PC-9 (cell line): ENCODE measurements at regions of chr6 and their contacts with region 1.

Region 1: GRCh38 chr6:52020945-52021570 is 66.4 kb downstream of the PKHD1 start:
- DNase-seq: no peak
- H3K4me3 ChIP-seq: no peak overlapping the region
- H3K27ac ChIP-seq: no peak overlapping the region
- H3K4me1 ChIP-seq: no peaks in the 10 kb centered on the region
- H3K27me3 ChIP-seq: 0 out of 2 replicates have a peak, but pooled peaks cover 13% of the 10 kb centered on the region
- CTCF ChIP-seq: peak; percentile 91

Region 2: DNA sequence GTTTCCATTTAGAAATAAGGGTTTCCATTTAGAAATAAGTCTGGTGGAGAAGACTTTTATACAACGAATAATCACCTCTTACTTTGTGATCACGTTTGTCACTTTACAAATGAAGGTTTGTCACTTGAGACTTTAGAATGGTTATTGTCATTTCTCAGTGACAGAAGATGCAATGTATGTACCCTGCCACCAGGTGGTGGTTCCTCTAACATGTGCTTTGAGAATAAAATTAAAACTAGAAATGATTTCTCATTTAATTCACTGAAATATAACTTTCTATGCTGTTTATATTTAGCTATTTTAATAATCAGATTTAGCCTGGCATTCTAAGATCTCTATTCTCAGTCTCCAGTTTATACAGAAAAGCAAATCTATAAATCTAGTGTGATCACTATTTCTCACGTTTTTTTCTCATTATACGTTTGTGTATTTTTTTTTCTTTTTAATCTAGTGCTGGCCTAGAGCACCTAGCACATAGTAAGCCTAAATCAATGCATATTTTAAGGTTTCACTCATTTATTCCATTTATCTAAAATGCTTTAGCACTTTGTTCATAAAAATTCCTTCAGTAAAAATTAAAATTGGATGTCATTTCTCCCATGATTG is 1365.1 kb before region 1 on chr6:
- CTCF ChIA-PET with region 1: no interaction called
- POLR2A ChIA-PET with region 1: no interaction called
- intact Hi-C with region 1: loop called (anchors 5 kb)
- DNase-seq: no peak
- H3K4me3 ChIP-seq: no peak overlapping the region
- H3K27ac ChIP-seq: no peak overlapping the region
- H3K4me1 ChIP-seq: no peaks in the 10 kb centered on the region
- H3K27me3 ChIP-seq: no peaks in the 10 kb centered on the region
- CTCF ChIP-seq: peak; percentile 74

Region 3: DNA sequence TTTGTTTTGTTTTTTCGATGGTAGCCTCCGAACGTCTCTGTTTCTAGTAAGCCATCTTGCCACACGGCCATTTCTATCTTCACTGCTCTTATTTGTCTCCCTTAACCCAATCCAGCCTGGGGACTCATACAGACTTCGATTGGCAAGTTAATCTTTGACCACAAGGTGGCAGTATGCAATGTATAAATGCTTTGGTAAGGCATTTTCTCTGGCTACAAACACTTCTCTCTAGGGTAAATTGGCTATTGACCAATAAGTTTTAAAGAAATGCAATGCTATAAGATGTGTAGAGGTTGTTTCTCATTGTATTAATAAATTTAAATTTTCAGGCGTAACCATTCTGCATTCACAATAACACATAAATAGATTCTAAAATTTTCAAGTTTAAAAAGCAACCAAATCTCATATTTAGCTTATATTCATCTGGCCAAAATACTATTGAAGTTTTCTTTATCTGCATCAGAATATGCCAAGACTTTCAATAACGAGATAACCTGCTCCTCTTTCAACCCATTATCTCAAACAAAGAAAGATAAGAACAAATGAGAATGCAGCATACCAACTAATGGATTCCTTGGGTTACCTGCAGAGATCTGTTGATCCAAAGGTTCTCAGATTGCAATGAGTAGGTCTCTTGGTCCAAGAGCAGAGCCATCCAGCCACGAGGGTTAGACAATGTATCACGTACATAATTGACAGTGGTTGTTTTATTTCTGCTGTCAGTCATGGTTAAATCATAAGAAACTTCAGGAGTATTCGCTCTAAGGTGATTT is 165.6 kb before region 1 on chr6:
- CTCF ChIA-PET with region 1: no interaction called
- POLR2A ChIA-PET with region 1: no interaction called
- intact Hi-C with region 1: loop called (anchors 10 kb)
- DNase-seq: peak in 1 of 2 experiments; percentile 54
- H3K4me3 ChIP-seq: no peak overlapping the region
- H3K27ac ChIP-seq: no peak overlapping the region
- H3K4me1 ChIP-seq: no peaks in the 10 kb centered on the region
- H3K27me3 ChIP-seq: no peaks in the 10 kb centered on the region
- CTCF ChIP-seq: peak; percentile 78

Region 4: GRCh38 chr6:51868591-51869355 is 152.3 kb before region 1 on chr6:
- CTCF ChIA-PET with region 1: interaction called, 14 read pairs
- POLR2A ChIA-PET with region 1: no interaction called
- intact Hi-C with region 1: no loop called
- DNase-seq: no peak
- H3K4me3 ChIP-seq: no peak overlapping the region
- H3K27ac ChIP-seq: no peak overlapping the region
- H3K4me1 ChIP-seq: no peaks in the 10 kb centered on the region
- H3K27me3 ChIP-seq: no peaks in the 10 kb centered on the region
- CTCF ChIP-seq: no peak

Region 5: GRCh38 chr6:52042141-52042885 is 21.3 kb after region 1 on chr6:
- CTCF ChIA-PET with region 1: no interaction called
- POLR2A ChIA-PET with region 1: no interaction called
- intact Hi-C with region 1: no loop called
- DNase-seq: no peak
- H3K4me3 ChIP-seq: no peak overlapping the region
- H3K27ac ChIP-seq: no peak overlapping the region
- H3K4me1 ChIP-seq: no peaks in the 10 kb centered on the region
- H3K27me3 ChIP-seq: no peaks in the 10 kb centered on the region
- CTCF ChIP-seq: no peak

Region 6: DNA sequence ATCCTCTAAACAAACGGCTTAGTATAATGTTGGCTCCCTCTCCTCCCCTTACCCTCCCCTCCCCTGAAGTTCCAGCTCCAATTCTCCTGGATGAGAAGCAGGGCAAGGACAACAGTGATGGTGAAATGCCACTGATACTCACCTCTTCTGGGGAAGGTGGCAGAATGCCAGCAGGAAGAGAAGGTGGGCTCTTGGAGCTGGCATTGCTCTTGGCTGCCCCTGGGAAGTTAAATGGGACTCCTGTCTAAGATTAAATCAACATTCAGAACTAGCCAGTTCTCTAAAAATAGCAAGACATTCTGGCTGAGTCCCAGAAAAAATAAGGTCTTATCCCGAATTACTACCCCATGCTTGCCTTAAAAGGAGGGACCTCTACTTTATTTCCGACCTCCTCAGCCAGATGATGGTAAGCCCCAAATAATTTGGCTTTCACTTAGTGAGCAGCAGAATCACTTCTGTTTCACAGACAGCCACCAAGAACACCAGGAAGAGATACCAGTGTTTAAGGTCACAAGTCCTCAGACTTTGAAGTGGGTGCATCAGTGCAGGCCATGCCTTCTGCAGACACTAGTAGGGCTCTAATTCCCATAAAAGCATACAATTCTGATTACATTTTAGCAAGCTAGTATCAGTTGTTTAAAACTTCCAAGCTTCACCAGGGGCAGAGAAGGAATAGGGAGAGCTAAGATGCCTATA is 119.1 kb after region 1 on chr6:
- CTCF ChIA-PET with region 1: no interaction called
- POLR2A ChIA-PET with region 1: no interaction called
- intact Hi-C with region 1: no loop called
- DNase-seq: no peak
- H3K4me3 ChIP-seq: no peak overlapping the region
- H3K27ac ChIP-seq: no peak overlapping the region
- H3K4me1 ChIP-seq: no peaks in the 10 kb centered on the region
- H3K27me3 ChIP-seq: peaks cover 88% of the 10 kb centered on the region
- CTCF ChIP-seq: no peak